CD4-positive, alpha-beta memory T cell (primary cell): ENCODE measurements at regions of chr4 and their contacts with region 1.

Region 1: DNA sequence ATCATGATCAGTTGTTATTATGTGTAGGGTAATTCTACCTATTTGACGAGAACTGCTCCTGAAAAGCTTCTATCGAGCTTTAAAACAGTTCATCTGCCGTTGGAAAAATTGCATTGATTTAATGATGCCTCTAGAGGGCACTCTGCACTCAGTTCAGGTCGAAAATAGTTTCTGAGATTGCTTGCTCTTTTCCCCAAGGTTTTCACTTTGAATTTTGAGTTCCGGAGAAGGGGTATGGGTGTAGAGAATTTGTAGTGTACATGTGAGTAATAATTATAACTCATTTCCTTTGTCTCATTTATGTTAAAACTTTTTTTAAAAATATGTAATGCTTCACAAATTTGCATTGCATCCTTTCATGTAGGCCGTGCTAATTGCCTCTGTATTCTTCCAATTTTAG is 28.4 kb upstream of the TNIP3 start:
- DNase-seq: peak in 3 of 5 donors; percentile 33 to 47 (median 46)
- H3K4me3 ChIP-seq: no peak overlapping the region
- H3K4me3 Mint-ChIP-seq: peak overlapping the region; percentile 40 to 83 (median 73)
- H3K27ac ChIP-seq: no peak overlapping the region
- H3K27ac Mint-ChIP-seq: peak overlapping the region in 4 of 7 donors; percentile 0 to 79 (median 60)
- H3K4me1 ChIP-seq: peaks cover 53% of the 10 kb centered on the region
- H3K4me1 Mint-ChIP-seq: peaks cover 37 to 51% (median 44%) of the 10 kb centered on the region in 4 donors
- H3K27me3 ChIP-seq: no peaks in the 10 kb centered on the region
- H3K27me3 Mint-ChIP-seq: no peaks in the 10 kb centered on the region

Region 2: DNA sequence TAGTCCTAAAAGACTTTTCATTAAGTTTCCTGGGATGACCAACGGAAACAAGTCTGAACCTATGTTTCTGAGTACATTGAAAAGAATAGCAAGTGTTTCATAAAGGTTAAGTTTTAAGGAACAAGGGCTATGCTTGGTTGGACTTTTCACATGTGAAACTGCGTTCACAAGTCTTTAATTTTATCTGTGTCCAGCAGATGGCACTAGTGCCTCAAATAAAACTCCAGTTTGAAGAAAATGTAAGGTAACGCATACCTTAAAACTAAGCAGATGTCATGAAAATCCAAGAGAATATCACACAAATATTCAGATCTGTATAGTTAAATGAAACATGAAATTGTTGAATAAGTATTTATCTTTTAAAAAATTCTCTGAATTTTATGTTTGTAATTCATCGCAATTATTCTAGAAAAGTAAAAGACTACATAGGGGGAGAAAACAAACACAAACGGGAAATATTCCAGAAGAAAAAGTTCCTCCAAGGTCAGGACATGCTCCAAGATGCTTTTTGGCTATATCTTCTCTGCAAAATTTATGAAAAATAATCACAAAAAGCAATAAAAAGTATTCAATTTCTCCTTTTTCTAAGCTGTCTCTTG is 1036.3 kb before region 1 on chr4:
- CTCF ChIA-PET with region 1: interaction called, 3 read pairs
- POLR2A ChIA-PET with region 1: no interaction called
- intact Hi-C with region 1: loop called (anchors 5 kb)
- DNase-seq: peak; percentile 38 to 56 (median 53)
- H3K4me3 ChIP-seq: no peak overlapping the region
- H3K4me3 Mint-ChIP-seq: no peak overlapping the region
- H3K27ac ChIP-seq: no peak overlapping the region
- H3K27ac Mint-ChIP-seq: no peak overlapping the region
- H3K4me1 ChIP-seq: no peaks in the 10 kb centered on the region
- H3K4me1 Mint-ChIP-seq: no peaks in the 10 kb centered on the region
- H3K27me3 ChIP-seq: no peaks in the 10 kb centered on the region
- H3K27me3 Mint-ChIP-seq: peaks cover 0 to 2% of the 10 kb centered on the region in 2 donors

Region 3: GRCh38 chr4:121118344-121118743 is 74.1 kb before region 1 on chr4:
- CTCF ChIA-PET with region 1: interaction called, 22 read pairs
- POLR2A ChIA-PET with region 1: interaction called, 3 read pairs
- intact Hi-C with region 1: loop called (anchors 5 kb)
- DNase-seq: no peak
- H3K4me3 ChIP-seq: no peak overlapping the region
- H3K4me3 Mint-ChIP-seq: no peak overlapping the region
- H3K27ac ChIP-seq: no peak overlapping the region
- H3K27ac Mint-ChIP-seq: peak overlapping the region in 2 of 7 donors; percentile 55 to 67
- H3K4me1 ChIP-seq: peaks cover 9% of the 10 kb centered on the region
- H3K4me1 Mint-ChIP-seq: peaks cover 8 to 21% (median 9%) of the 10 kb centered on the region in 4 donors
- H3K27me3 ChIP-seq: no peaks in the 10 kb centered on the region
- H3K27me3 Mint-ChIP-seq: no peaks in the 10 kb centered on the region

Region 4: DNA sequence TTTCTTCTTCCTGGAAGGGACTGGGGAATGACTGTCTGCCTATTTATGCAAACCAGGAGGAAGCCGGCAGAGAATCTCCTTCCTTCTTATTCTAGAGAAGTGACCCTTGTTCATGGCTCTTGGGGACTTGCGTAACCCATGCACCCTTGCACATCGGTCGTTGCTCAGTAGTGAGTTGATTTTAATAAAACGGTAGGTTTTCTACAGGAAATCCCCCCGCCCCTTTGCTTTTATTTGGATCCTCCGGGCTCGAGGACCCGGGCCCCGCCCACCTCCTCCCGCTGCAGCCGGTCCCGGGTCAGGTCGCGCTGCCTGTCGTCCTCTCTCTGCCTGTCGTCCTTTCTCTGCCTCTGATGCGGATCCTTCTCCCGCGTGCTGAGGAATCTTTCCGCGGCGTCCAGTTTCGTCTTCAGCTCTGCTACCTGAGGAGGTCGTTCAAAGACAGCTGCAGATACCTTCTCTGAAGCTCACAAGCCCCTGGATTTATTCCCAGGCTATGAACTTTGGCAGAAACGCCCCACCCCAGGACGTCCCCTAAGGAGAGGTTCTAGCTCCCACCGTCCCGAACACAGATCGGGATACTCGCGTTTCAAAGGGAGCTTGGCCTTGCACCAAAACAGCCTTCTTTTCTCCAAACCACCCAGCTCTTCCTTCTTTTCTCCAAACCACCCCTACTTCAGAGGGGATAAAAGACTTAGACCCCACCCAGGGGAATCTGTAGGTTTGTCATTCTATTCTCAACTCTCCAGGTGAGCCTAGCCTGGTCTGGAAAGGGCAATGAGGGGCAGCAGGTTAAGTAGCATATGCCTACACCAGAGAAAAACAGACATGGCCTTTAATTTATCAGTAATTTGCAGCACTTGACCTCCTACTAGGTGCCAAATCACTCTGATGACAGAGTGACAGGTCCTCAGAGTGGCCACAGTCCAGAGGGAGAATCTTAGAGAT is 35.4 kb before region 1 on chr4:
- CTCF ChIA-PET with region 1: interaction called, 38 read pairs
- POLR2A ChIA-PET with region 1: interaction called, 15 read pairs
- intact Hi-C with region 1: loop called (anchors 5 kb)
- DNase-seq: peak in 3 of 5 donors; percentile 16 to 25 (median 19)
- H3K4me3 ChIP-seq: peak overlapping the region; percentile 33 to 51
- H3K4me3 Mint-ChIP-seq: peak overlapping the region; percentile 88 to 97 (median 94)
- H3K27ac ChIP-seq: peak overlapping the region; percentile 1
- H3K27ac Mint-ChIP-seq: peak overlapping the region; percentile 30 to 94 (median 90)
- H3K4me1 ChIP-seq: peaks cover 55% of the 10 kb centered on the region
- H3K4me1 Mint-ChIP-seq: peaks cover 34 to 54% (median 47%) of the 10 kb centered on the region in 4 donors
- H3K27me3 ChIP-seq: no peaks in the 10 kb centered on the region
- H3K27me3 Mint-ChIP-seq: no peaks in the 10 kb centered on the region

Region 5: DNA sequence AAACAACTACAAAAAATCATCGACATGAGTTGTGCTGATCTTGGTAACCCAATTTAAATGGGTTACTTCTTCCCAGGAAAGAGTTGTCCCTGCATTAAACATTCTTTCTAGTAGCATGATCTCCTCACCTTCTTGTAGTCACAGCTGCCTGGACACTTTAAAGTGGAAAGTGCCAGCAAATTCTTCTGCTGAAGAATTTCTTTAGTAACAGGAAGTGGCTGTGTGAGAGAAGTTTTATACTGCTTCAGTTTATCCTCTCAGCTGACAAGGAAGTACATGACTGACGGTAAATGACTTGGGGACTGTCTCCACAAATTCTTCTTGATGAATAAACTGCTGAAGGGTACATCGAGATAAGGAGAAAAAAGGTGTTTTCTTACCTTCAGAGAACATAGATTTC is 10.2 kb before region 1 on chr4:
- CTCF ChIA-PET with region 1: interaction called, 34 read pairs
- POLR2A ChIA-PET with region 1: interaction called, 13 read pairs
- intact Hi-C with region 1: loop called (anchors 1 kb)
- DNase-seq: peak; percentile 42 to 64 (median 57)
- H3K4me3 ChIP-seq: peak overlapping the region; percentile 43 to 62
- H3K4me3 Mint-ChIP-seq: peak overlapping the region; percentile 66 to 96 (median 86)
- H3K27ac ChIP-seq: peak overlapping the region; percentile 87
- H3K27ac Mint-ChIP-seq: peak overlapping the region; percentile 80 to 98 (median 92)
- H3K4me1 ChIP-seq: peaks cover 57% of the 10 kb centered on the region
- H3K4me1 Mint-ChIP-seq: peaks cover 49 to 71% (median 60%) of the 10 kb centered on the region in 4 donors
- H3K27me3 ChIP-seq: no peaks in the 10 kb centered on the region
- H3K27me3 Mint-ChIP-seq: no peaks in the 10 kb centered on the region

Region 6: GRCh38 chr4:121307445-121308327 is 115.2 kb after region 1 on chr4:
- CTCF ChIA-PET with region 1: interaction called, 57 read pairs
- POLR2A ChIA-PET with region 1: interaction called, 3 read pairs
- intact Hi-C with region 1: loop called (anchors 1 kb)
- DNase-seq: peak; percentile 44 to 53 (median 45)
- H3K4me3 ChIP-seq: no peak overlapping the region
- H3K4me3 Mint-ChIP-seq: peak overlapping the region in 1 of 8 donors; percentile 17
- H3K27ac ChIP-seq: no peak overlapping the region
- H3K27ac Mint-ChIP-seq: peak overlapping the region in 2 of 7 donors; percentile 29 to 73
- H3K4me1 ChIP-seq: peaks cover 6% of the 10 kb centered on the region
- H3K4me1 Mint-ChIP-seq: peaks cover 9 to 15% (median 13%) of the 10 kb centered on the region in 4 donors
- H3K27me3 ChIP-seq: no peaks in the 10 kb centered on the region
- H3K27me3 Mint-ChIP-seq: peaks cover 0 to 3% of the 10 kb centered on the region in 2 donors